ENCODE measurements at regions of chr2 and their contacts with region 1.

Region 1: GRCh38 chr2:234135720-234136221 is 85.3 kb downstream of the SPP2 start:
- DNase-seq: peak; percentile 36 to 65 (median 61)
- H3K4me3 ChIP-seq: no peak overlapping the region
- H3K27ac ChIP-seq: no peak overlapping the region
- H3K4me1 ChIP-seq: no peaks in the 10 kb centered on the region
- H3K27me3 ChIP-seq: peaks cover 0 to 20% (median 7%) of the 10 kb centered on the region in 5 experiments

Region 2: DNA sequence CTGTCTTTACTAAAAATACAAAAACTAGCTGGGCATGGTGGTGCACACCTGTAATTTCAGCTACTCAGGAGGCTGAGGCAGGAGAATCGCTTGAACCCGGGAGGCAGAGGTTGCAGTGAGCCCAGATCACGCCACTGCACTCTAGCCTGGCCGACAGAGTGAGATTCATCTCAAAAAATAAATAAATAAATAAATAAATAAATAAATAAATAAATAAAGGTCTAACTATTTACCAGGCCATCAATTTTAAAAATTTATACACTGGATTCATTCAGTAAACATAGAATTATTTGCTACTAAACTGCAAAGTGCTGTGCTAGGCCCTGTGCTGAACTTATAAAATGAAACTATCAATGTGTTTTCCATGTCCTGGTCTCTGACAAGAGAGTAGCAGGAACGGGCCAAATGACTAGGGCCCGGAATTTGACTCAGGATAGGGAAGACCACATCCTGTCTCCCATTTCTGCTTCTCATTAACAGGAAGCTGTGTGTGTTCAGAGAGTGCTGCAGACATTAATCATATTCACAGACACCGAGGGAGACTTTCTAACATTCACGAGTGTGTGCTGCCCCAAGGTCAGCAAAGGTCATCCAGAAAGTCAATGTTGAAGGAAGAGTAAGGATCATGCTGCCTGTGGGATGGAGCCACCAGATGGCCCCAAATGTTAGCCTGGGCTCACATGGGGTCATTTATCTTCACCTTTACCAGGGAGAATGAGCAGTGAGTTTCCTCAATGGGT is 10.5 kb after region 1 on chr2:
- CTCF ChIA-PET with region 1: interaction called, 10 read pairs
- POLR2A ChIA-PET with region 1: no interaction called
- DNase-seq: no peak
- H3K4me3 ChIP-seq: no peak overlapping the region
- H3K27ac ChIP-seq: no peak overlapping the region
- H3K4me1 ChIP-seq: peaks cover 0 to 9% (median 0%) of the 10 kb centered on the region in 4 experiments
- H3K27me3 ChIP-seq: peaks cover 0 to 4% (median 0%) of the 10 kb centered on the region in 5 experiments

Region 3: GRCh38 chr2:234169187-234169570 is 33.4 kb after region 1 on chr2:
- CTCF ChIA-PET with region 1: interaction called, 12 read pairs
- POLR2A ChIA-PET with region 1: no interaction called
- DNase-seq: no peak
- H3K4me3 ChIP-seq: no peak overlapping the region
- H3K27ac ChIP-seq: no peak overlapping the region
- H3K4me1 ChIP-seq: peaks cover 1 to 7% (median 4%) of the 10 kb centered on the region in 4 experiments
- H3K27me3 ChIP-seq: peaks cover 0 to 15% (median 0%) of the 10 kb centered on the region in 5 experiments

Region 4: GRCh38 chr2:234500394-234501006 is 364.7 kb after region 1 on chr2:
- CTCF ChIA-PET with region 1: interaction called, 37 read pairs
- POLR2A ChIA-PET with region 1: no interaction called
- DNase-seq: peak; percentile 67 to 77 (median 73)
- H3K4me3 ChIP-seq: no peak overlapping the region
- H3K27ac ChIP-seq: no peak overlapping the region
- H3K4me1 ChIP-seq: peaks cover 0 to 15% (median 10%) of the 10 kb centered on the region in 4 experiments
- H3K27me3 ChIP-seq: peaks cover 0 to 30% (median 13%) of the 10 kb centered on the region in 5 experiments

Measured in common myeloid progenitor, CD34-positive (primary cell).